ENCODE measurements at regions of chr2 and their contacts with region 1.

Region 1: GRCh38 chr2:36355151-36355889 is at the start of gene CRIM1:
- DNase-seq: peak; percentile 86
- H3K4me3 Mint-ChIP-seq: peak within 1 kb of the TSS; percentile 95
- H3K27ac Mint-ChIP-seq: peak within 1 kb of the TSS; percentile 97
- H3K4me1 Mint-ChIP-seq: peaks cover 28% of the 10 kb centered on the region
- H3K27me3 Mint-ChIP-seq: no peaks in the 10 kb centered on the region
- CTCF ChIP-seq: no peak
- total RNA-seq, gene CRIM1: 119 and 185 TPM in 2 replicates

Region 2: DNA sequence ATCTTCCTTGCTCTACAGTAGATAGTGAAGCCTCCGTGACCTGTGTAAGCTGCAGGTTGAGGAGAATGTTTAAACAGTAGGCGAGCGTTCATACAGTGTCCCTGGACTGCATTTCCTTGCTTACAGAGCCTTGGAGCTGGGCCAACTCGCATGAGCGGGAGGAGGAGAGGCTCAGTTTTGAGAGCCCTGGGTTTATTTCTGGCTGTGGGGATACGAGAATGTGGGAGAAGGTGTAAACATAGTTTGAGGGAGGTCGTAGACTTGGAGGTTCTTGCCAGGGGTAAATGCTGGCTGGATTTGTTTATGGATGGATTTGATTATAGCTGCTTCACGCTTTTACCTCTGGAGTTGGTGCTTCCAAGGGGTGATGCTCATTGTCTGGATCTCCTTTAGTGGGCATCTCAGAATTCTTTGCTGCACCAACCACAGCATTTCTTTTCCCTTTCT is 21.0 kb after region 1 on chr2:
- CTCF ChIA-PET with region 1: interaction called, 146 read pairs
- POLR2A ChIA-PET with region 1: interaction called, 742 read pairs
- intact Hi-C with region 1: loop called (anchors 1 kb)
- DNase-seq: peak; percentile 75
- H3K4me3 Mint-ChIP-seq: peak overlapping the region; percentile 34
- H3K27ac Mint-ChIP-seq: peak overlapping the region; percentile 78
- H3K4me1 Mint-ChIP-seq: peaks cover 72% of the 10 kb centered on the region
- H3K27me3 Mint-ChIP-seq: no peaks in the 10 kb centered on the region
- CTCF ChIP-seq: no peak

Region 3: GRCh38 chr2:36433311-36434217 is 78.2 kb after region 1 on chr2:
- CTCF ChIA-PET with region 1: interaction called, 15 read pairs
- POLR2A ChIA-PET with region 1: interaction called, 28 read pairs
- intact Hi-C with region 1: loop called (anchors 5 kb)
- DNase-seq: peak; percentile 92
- H3K4me3 Mint-ChIP-seq: peak overlapping the region; percentile 10
- H3K27ac Mint-ChIP-seq: peak overlapping the region; percentile 54
- H3K4me1 Mint-ChIP-seq: peaks cover 46% of the 10 kb centered on the region
- H3K27me3 Mint-ChIP-seq: no peaks in the 10 kb centered on the region
- CTCF ChIP-seq: no peak

Region 4: DNA sequence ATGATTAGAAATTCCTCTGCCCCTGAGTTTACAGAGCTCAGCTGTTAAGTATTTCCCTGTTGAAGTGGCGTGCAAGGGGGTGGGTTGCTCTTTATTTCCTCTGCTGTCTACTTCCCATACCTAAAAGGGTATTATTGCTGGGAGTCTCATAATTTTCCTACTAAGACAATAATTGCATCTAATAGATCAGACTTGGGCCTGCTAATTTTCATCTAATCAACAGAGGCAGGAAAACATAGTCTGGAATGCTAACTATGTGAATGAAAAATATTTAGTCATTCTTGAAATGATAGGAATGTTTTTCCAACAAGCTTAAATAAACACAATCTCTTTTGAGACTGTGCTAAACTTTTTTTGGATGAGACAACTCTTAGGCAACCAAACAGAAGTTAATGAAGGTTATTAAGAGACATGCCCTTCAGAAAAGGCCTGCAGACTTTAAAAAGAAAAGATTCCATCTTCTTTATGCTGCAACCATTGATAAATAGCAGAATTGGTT is 131.3 kb after region 1 on chr2:
- CTCF ChIA-PET with region 1: interaction called, 11 read pairs
- POLR2A ChIA-PET with region 1: interaction called, 21 read pairs
- intact Hi-C with region 1: loop called (anchors 5 kb)
- DNase-seq: peak; percentile 50
- H3K4me3 Mint-ChIP-seq: peak overlapping the region; percentile 20
- H3K27ac Mint-ChIP-seq: peak overlapping the region; percentile 61
- H3K4me1 Mint-ChIP-seq: peaks cover 51% of the 10 kb centered on the region
- H3K27me3 Mint-ChIP-seq: no peaks in the 10 kb centered on the region
- CTCF ChIP-seq: no peak

Region 5: DNA sequence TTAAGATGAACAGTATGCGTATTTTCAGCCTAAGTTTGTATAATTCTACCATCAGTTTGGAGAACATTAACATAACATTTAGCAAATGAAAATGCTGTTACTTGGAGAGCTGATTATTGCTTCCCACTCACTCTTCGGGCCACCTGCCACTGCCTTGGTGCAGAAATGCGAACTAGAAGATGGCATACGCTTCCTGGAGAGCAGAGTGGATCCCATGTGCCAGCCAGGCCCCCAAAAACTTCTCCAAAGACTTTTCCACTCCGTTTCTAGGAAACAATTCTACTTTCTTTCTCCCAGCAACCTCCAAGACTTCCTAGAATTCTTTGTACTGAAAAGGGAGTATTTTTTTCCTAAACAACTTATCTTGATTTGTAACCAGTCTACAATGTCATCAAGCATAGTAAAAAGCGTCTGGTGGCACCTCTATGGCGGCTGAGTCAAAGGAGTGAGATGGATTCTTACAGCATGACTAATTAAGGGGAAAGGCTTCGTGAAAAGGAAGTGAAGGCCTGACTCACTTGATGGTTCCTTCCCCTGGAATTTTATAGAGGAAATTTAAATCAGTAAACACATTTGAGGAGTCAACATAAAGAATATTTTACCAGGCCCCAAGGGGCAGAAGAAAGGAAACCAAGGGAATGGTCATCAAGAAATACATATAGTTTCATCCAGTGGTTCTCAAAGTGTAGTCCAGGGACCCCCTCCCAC is 206.1 kb after region 1 on chr2:
- CTCF ChIA-PET with region 1: interaction called, 5 read pairs
- POLR2A ChIA-PET with region 1: interaction called, 12 read pairs
- intact Hi-C with region 1: no loop called
- DNase-seq: peak; percentile 83
- H3K4me3 Mint-ChIP-seq: peak overlapping the region; percentile 46
- H3K27ac Mint-ChIP-seq: peak overlapping the region; percentile 98
- H3K4me1 Mint-ChIP-seq: peaks cover 45% of the 10 kb centered on the region
- H3K27me3 Mint-ChIP-seq: no peaks in the 10 kb centered on the region
- CTCF ChIP-seq: no peak

Region 6: DNA sequence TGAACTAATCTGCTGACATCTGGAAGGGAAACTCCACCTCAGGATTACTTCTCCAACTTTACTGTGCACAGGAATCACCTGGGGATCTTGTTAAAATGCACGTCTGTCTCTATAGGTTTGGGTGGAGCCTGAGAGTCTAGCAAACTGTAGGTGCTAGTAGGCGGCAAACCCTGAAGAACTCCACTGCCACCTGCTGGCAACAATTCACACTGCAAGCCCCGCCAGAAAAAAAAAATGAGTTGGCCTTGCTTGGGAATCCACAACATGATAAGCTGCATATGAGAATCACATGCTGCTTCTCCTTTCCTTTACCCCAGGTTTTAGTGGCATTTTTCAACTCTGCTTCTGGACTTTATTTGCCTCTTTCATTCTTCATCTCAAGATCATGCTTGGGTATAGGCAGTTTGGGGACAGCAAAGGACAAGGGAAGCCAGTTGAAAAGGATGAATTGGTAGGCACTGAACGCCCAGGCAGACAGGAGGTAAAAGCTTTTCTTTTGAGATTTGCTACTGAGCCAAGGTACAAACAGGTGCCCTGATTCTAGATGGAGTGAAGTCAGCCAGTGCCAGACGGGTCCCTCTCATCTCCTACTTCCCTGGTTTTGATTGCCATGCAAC is 430.0 kb after region 1 on chr2:
- CTCF ChIA-PET with region 1: interaction called, 10 read pairs
- POLR2A ChIA-PET with region 1: interaction called, 3 read pairs
- intact Hi-C with region 1: loop called (anchors 10 kb)
- DNase-seq: peak; percentile 73
- H3K4me3 Mint-ChIP-seq: no peak overlapping the region
- H3K27ac Mint-ChIP-seq: no peak overlapping the region
- H3K4me1 Mint-ChIP-seq: no peaks in the 10 kb centered on the region
- H3K27me3 Mint-ChIP-seq: peaks cover 32% of the 10 kb centered on the region
- CTCF ChIP-seq: peak; percentile 82